Activated CD4-positive, alpha-beta T cell treated with anti-CD3 and anti-CD28 coated beads, Interleukin-2, amount 10 ng/mL, durations not matched to agents 24 days and 14 days (primary cell): ENCODE measurements at regions of chr1 and their contacts with region 1.

Region 1: DNA sequence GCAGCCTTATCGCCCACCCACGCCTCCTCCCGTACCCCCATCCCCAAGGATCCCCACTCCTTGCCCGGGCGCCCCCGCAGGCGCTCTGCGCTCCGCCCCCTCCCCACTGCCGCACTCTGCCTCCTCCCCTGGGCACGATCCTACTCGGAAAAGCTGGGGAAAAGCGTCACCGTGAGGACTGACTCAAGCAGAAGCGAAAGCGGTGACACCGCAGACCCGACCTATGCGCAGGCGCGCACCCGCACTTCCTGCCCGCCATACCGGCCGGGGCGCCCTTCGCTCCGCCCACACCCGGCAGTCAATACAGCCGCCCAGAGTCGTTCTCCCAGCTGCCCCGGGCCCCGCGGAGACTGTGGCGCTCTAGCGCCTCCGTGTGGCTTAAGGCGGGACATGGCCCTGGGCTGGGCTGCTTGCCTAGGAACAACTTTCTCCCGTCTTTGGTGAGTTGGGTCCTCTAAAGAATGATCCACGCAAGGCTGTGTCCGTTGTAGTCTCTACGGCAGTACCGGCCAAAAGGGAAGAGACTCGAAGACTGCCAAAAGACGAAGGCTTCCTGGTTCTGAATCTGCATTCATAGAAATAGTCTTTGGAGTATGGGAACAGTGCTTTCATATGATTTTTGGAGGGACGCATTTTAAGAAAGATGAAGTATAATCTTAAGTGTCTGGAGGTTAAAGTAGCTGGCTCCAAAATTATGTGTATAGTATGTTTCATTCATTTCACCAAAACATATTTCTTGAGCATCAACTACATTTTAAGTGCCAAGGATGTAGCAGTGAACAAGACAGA is at the start of gene OMA1:
- DNase-seq: peak; percentile 99
- H3K4me3 Mint-ChIP-seq: peak within 1 kb of the TSS; percentile 90
- H3K27ac Mint-ChIP-seq: peak within 1 kb of the TSS; percentile 92
- H3K4me1 Mint-ChIP-seq: peaks cover 22% of the 10 kb centered on the region
- H3K27me3 Mint-ChIP-seq: peaks cover 12% of the 10 kb centered on the region
- total RNA-seq, gene OMA1: 10.6 and 13.8 TPM in 2 replicates

Region 2: DNA sequence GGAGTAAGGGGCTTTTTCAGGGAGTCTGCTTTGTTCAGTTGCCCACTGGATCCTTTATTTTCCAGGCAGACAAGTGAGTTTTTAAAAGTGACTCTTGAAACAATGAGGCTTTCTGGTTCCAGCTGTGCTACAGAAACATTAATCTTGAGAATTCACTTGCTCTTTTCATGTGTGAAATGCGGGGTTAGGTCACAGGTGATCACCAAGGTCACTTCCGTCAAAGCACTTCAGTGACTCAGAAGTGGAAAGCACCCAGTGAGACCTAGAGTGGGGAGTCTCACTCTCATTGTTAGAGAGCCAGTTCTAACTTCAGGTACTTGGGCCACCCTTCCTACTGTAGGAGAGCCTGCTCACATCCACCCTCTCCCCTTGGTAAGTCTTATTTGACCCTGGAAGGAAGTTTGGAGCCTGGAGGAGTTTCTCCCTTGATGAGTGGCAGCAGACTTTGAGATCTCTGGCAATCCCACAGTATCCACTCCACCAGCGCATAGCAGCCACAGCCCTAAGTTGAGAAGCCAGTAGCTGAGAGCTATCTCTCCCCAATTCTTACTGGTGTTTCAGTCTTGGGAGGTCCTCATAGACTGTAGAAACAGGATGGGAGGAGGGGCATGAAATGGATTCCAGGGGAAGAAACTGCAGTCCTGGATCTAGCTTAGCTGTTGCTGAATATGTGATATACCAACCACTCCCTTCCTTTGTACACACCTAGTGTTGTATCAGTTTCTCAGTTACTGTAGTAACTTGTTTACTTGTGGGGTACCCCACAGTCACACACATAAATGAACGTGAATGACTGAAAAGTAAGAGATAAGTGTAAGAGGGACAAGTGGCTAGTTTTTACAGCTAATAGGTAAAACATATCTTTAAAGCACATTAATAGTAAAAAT is 27.2 kb after region 1 on chr1:
- intact Hi-C with region 1: loop called (anchors 1 kb)
- DNase-seq: peak; percentile 87
- H3K4me3 Mint-ChIP-seq: peak overlapping the region; percentile 49
- H3K27ac Mint-ChIP-seq: peak overlapping the region; percentile 52
- H3K4me1 Mint-ChIP-seq: peaks cover 35% of the 10 kb centered on the region
- H3K27me3 Mint-ChIP-seq: peaks cover 75% of the 10 kb centered on the region

Region 3: DNA sequence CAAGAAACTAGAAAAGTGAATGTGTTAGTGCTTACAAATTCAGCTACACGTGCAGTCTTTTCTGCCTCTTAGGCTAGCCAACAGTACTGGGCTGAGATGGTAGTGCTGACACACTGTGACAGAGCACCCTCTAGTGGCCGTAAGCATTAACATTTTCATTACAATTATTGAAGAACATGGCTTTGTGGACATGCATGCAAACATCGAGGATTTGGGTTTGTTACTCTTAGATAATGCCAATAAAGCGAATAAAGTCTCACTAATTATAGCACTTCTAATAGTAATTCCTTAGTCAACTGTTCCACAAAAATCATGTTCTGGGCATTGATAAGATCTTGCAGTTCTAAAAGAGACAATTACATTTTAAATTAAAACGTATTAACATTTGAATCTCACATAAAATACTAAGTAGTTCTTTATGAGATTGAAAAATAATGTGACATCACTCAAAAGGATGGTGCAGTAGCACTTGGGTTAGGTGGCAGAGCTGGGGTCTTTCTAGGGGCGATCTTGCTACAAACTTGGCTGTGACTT is 106.0 kb after region 1 on chr1:
- intact Hi-C with region 1: loop called (anchors 1 kb)
- DNase-seq: peak; percentile 88
- H3K4me3 Mint-ChIP-seq: no peak overlapping the region
- H3K27ac Mint-ChIP-seq: no peak overlapping the region
- H3K4me1 Mint-ChIP-seq: peaks cover 13% of the 10 kb centered on the region
- H3K27me3 Mint-ChIP-seq: no peaks in the 10 kb centered on the region

Region 4: DNA sequence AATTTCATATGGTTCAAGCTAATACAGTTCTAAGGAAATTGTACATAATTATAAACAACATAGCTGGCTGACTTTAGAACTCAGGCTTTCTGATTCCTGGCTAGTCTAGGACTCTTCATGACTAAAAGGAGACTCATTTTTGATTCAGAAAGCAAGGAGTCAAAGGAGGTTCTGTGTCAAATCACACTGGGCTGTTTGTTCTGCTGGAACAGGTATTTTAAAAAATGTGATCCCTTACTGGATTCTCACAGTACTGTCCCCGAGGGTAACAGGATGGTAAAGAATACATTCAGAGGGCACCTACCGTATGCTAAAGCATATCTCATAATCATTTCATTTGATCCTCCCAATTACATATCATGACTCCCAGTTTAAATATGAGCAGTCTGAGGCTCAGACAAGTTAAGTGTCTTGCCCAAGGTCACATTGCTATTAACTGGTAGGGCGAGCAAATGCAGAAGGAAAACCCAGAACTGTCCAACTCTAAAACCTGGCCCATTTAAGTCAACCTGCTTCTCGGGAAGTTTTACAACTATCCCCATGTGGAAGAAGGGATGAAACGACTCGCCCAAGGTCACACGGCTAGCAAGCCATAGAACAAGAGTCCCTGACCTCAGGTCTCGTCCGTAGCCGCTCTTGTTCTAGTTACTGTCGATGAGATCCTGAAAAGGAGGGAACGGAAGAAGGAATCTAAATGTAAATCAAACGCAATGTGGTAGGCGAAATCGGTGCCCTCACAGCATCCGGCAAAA is 152.5 kb after region 1 on chr1:
- intact Hi-C with region 1: loop called (anchors 1 kb)
- DNase-seq: peak; percentile 57
- H3K4me3 Mint-ChIP-seq: peak overlapping the region; percentile 99
- H3K27ac Mint-ChIP-seq: peak overlapping the region; percentile 98
- H3K4me1 Mint-ChIP-seq: peaks cover 19% of the 10 kb centered on the region
- H3K27me3 Mint-ChIP-seq: no peaks in the 10 kb centered on the region